HepG2 (cell line): ENCODE measurements at regions of chr10 and their contacts with region 1.

Region 1: DNA sequence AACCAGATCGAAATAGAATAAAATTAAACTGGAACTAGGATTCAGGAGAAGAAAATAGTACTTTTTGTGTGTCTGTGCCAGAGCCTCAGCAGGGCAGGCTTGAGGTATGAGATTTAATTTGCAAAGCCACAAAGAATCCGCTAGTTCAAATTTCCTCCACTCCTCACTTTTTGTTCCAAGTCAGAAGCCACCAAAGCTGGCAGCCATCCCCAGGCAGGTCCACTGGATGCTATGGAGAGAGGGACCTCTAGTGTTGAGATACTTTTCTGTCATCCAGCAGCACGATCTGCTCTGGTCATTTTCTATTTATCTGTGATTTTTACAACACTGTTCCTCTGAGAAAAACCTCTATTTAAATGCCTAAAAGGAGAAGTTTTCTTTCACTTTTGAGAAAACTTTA is 147.9 kb upstream of the FRMD4A start:
- DNase-seq: no peak
- ATAC-seq: peak; percentile 64; the same call in 2 of the 3 replicates
- H3K4me3 ChIP-seq: no peak overlapping the region
- H3K27ac ChIP-seq: no peak overlapping the region
- H3K4me1 ChIP-seq: no peaks in the 10 kb centered on the region
- H3K27me3 ChIP-seq: peaks cover 2 to 42% of the 10 kb centered on the region in 2 experiments; a peak in 3 of 5 replicates
- CTCF ChIP-seq: peak; percentile 55
- EP300 ChIP-seq: no peak
- POLR2A ChIP-seq: no peak
- RAD21 ChIP-seq: no peak

Region 2: GRCh38 chr10:13787015-13787421 is 691.6 kb before region 1 on chr10:
- CTCF ChIA-PET with region 1: no interaction called
- POLR2A ChIA-PET with region 1: no interaction called
- in situ Hi-C with region 1: no loop called
- intact Hi-C with region 1: loop called (anchors 5 kb)
- DNase-seq: no peak
- ATAC-seq: no peak
- H3K4me3 ChIP-seq: no peak overlapping the region
- H3K27ac ChIP-seq: no peak overlapping the region
- H3K4me1 ChIP-seq: no peaks in the 10 kb centered on the region
- H3K27me3 ChIP-seq: peaks cover 2 to 23% of the 10 kb centered on the region in 2 experiments; a peak in 2 of 5 replicates
- CTCF ChIP-seq: no peak
- EP300 ChIP-seq: no peak
- POLR2A ChIP-seq: no peak
- RAD21 ChIP-seq: no peak

Region 3: DNA sequence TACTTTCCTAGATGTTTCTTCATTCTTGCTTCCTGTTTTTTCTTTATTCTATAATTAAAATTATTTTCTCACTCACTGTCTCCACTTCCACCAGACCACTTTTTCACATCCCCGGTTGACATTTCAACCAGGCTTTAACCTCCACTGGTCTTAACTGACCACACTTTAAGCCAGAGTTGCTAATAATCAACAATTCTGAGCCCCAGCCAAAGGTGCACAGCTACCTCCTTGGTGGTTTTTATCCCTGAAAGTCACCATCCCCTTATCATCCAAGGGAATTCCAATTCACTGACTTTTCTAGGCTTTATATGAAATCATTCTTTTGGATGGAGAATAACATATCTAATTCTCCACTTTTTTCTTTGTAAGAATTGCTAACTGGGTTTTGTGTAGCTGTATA is 286.7 kb before region 1 on chr10:
- CTCF ChIA-PET with region 1: interaction called, 3 read pairs
- POLR2A ChIA-PET with region 1: no interaction called
- in situ Hi-C with region 1: loop called (anchors 5 kb)
- intact Hi-C with region 1: loop called (anchors 10 kb)
- DNase-seq: no peak
- ATAC-seq: no peak
- H3K4me3 ChIP-seq: no peak overlapping the region
- H3K27ac ChIP-seq: no peak overlapping the region
- H3K4me1 ChIP-seq: no peaks in the 10 kb centered on the region
- H3K27me3 ChIP-seq: peaks cover 1 to 5% of the 10 kb centered on the region in 2 experiments; a peak in 3 of 5 replicates
- CTCF ChIP-seq: no peak
- EP300 ChIP-seq: no peak
- POLR2A ChIP-seq: no peak
- RAD21 ChIP-seq: no peak